Gastrocnemius medialis (tissue), 4 donors: ENCODE measurements at regions of chr2 and their contacts with region 1.

Region 1: GRCh38 chr2:202801544-202801943 is 70.0 kb downstream of the ICA1L start:
- DNase-seq: no peak
- ATAC-seq: no peak
- H3K4me3 ChIP-seq: no peak overlapping the region
- H3K27ac ChIP-seq: peak overlapping the region; percentile 31 to 46 (median 38)
- H3K4me1 ChIP-seq: peaks cover 12 to 22% of the 10 kb centered on the region in 2 donors
- H3K27me3 ChIP-seq: no peaks in the 10 kb centered on the region
- CTCF ChIP-seq: no peak
- POLR2A ChIP-seq: no peak

Region 2: DNA sequence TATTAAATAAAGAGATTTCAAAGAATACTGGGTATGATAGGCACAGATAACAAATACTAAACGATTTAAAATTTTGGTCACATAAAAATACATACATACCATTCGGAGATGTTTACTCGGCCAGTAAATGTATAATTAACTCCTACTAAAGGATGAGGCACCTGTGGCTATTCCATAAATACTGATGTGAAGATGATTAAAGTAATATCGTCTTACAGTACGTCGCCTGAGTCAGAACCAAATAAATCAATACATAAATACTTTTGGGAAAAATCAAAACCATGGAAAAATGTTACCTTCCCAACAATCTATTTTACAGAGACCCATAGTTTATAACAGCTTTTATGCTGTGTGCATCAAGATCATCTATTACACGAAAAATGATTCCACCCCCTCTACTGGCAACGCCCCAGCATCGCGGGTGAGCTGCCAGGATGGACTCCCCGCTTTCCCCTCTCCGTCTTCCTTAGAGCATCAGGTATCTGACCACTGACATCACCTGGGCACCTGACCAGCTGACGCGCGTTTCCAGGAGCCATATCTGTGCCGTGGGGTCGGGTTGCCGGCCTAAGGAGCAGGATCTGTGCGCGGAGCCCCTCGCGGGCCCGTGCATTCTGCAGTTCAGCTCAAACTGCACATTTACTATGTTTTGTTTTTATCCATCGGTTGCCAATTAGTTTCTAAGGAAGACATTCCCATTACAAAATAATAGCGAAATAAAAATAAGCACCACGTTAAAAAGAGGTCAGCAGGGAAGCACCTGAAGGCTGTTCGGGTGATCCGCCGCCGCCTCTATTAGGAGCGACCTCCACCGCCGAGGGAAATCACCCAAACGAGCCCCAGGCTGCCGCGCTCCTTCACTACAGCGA is 69.1 kb after region 1 on chr2:
- in situ Hi-C with region 1: no loop called
- intact Hi-C with region 1: loop called (anchors 10 kb)
- DNase-seq: peak; percentile 47 to 74
- ATAC-seq: peak; percentile 78 to 85
- H3K4me3 ChIP-seq: peak overlapping the region; percentile 72 to 88 (median 84)
- H3K27ac ChIP-seq: peak overlapping the region; percentile 73 to 84 (median 79)
- H3K4me1 ChIP-seq: peaks cover 6 to 10% of the 10 kb centered on the region in 2 donors
- H3K27me3 ChIP-seq: no peaks in the 10 kb centered on the region
- CTCF ChIP-seq: no peak
- POLR2A ChIP-seq: peak; percentile 23 to 58